MCF 10A (cell line): ENCODE measurements at regions of chr9 and their contacts with region 1.

Region 1: GRCh38 chr9:127199001-127199791 is 65.4 kb upstream of the GARNL3 start:
- DNase-seq: peak; percentile 79
- H3K4me3 Mint-ChIP-seq: no peak overlapping the region
- H3K27ac Mint-ChIP-seq: no peak overlapping the region
- H3K4me1 Mint-ChIP-seq: peaks cover 4% of the 10 kb centered on the region
- H3K27me3 Mint-ChIP-seq: no peaks in the 10 kb centered on the region
- CTCF ChIP-seq: peak; percentile 92

Region 2: DNA sequence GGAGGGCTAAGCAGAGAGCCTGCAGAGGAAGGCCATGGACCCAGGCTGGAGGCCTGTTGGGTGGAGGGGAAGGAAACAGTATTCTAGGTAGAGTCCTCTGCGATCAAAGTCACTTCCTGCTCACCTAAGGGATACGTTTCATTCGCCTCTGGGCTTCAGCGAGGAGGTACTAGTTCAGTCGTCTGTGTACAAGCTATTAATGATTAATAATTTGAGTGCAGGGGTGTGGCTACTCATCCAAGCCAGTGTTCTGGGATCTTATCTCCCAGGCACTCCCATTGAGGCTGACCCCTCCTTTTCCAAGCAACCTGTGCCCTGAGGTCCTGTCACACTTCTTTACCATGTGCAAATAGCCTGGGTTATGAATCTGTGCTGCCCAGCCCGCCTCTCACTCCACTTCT is 259.4 kb before region 1 on chr9:
- CTCF ChIA-PET with region 1: interaction called, 131 read pairs
- POLR2A ChIA-PET with region 1: interaction called, 11 read pairs
- intact Hi-C with region 1: loop called (anchors 1 kb)
- DNase-seq: no peak
- H3K4me3 Mint-ChIP-seq: no peak overlapping the region
- H3K27ac Mint-ChIP-seq: no peak overlapping the region
- H3K4me1 Mint-ChIP-seq: no peaks in the 10 kb centered on the region
- H3K27me3 Mint-ChIP-seq: peaks cover 25% of the 10 kb centered on the region
- CTCF ChIP-seq: no peak

Region 3: GRCh38 chr9:126947529-126947928 is 251.7 kb before region 1 on chr9:
- CTCF ChIA-PET with region 1: interaction called, 131 read pairs
- POLR2A ChIA-PET with region 1: interaction called, 3 read pairs
- intact Hi-C with region 1: no loop called
- DNase-seq: peak; percentile 16
- H3K4me3 Mint-ChIP-seq: no peak overlapping the region
- H3K27ac Mint-ChIP-seq: no peak overlapping the region
- H3K4me1 Mint-ChIP-seq: no peaks in the 10 kb centered on the region
- H3K27me3 Mint-ChIP-seq: peaks cover 12% of the 10 kb centered on the region
- CTCF ChIP-seq: no peak

Region 4: GRCh38 chr9:126965541-126966428 is 233.4 kb before region 1 on chr9:
- CTCF ChIA-PET with region 1: interaction called, 107 read pairs
- POLR2A ChIA-PET with region 1: no interaction called
- intact Hi-C with region 1: loop called (anchors 1 kb)
- DNase-seq: peak; percentile 63
- H3K4me3 Mint-ChIP-seq: no peak overlapping the region
- H3K27ac Mint-ChIP-seq: no peak overlapping the region
- H3K4me1 Mint-ChIP-seq: peaks cover 7% of the 10 kb centered on the region
- H3K27me3 Mint-ChIP-seq: no peaks in the 10 kb centered on the region
- CTCF ChIP-seq: peak; percentile 82

Region 5: DNA sequence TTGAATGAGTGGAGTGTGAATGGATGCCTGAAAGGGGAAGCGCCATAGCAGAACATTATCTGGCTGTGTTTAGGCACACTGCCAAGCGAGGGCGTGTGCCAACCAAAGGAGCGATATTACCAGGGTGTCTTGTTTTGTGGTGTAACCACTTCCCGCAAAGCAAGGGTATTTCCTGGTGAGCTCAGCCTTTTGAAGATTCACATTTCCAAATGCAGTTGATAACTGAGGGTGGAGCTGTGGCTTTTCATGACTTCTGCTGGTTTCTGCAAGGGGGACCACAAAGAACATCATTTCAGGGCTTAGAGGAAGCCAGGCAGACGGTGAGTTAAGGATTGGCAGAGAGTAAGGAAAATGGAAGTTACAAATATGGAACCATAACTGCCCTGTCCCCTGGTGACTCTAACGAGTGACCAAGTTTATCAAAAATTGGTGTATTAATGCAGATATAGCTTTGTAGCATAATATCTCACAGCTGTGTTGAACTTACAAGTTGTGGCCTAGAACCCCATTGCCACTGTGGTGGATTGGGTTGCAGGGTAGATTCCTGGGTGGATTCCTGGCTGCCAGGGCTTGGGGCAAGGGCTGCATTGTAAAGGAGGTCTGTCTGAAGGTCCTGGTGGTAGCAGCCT is 213.2 kb before region 1 on chr9:
- CTCF ChIA-PET with region 1: interaction called, 3 read pairs
- POLR2A ChIA-PET with region 1: no interaction called
- intact Hi-C with region 1: loop called (anchors 1 kb)
- DNase-seq: peak; percentile 97
- H3K4me3 Mint-ChIP-seq: peak overlapping the region; percentile 9
- H3K27ac Mint-ChIP-seq: peak overlapping the region; percentile 67
- H3K4me1 Mint-ChIP-seq: peaks cover 37% of the 10 kb centered on the region
- H3K27me3 Mint-ChIP-seq: peaks cover 61% of the 10 kb centered on the region
- CTCF ChIP-seq: no peak

Region 6: DNA sequence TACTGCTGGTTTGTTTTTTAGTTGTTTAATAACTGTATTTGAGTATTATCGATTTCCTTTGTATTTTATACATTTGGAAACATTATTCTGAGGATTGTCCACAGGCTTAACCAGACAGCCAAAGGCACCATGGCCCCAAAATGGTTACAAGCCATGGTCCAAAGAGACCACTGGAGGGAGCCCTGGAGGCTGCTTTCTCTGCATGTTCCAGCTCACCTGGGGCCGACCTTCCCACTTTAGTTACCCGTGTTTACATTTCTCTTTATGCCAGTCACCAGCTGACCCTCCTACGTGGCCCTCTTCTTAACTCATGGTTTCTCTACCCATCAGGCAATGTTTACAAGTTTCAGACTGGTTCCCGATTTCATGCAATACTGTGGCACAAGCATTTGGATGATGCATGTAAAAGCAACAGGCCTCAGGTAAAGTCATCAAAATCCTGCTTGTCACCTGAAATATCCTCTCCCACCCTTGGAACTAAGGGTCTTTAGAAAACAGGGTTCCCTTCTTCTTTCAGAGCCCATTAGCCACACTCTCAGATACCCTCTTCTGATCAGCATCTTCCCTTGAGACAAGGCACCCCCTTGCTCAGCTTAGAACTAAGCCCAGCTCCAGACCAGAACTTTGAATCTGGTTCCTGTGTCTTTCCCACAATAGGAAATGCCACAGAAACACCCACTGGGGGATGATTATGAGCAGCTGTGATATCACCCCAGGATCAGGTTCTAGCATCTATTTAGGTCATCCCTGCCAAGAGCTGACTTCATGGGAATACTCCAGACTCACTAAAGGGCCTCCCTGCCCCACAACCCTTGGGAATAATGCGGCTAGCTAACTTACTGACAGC is 15.4 kb after region 1 on chr9:
- CTCF ChIA-PET with region 1: interaction called, 15 read pairs
- POLR2A ChIA-PET with region 1: interaction called, 3 read pairs
- intact Hi-C with region 1: no loop called
- DNase-seq: peak; percentile 76
- H3K4me3 Mint-ChIP-seq: no peak overlapping the region
- H3K27ac Mint-ChIP-seq: no peak overlapping the region
- H3K4me1 Mint-ChIP-seq: peaks cover 6% of the 10 kb centered on the region
- H3K27me3 Mint-ChIP-seq: peaks cover 12% of the 10 kb centered on the region
- CTCF ChIP-seq: peak; percentile 73